Tibial artery (tissue), 4 donors: ENCODE measurements at regions of chr3 and their contacts with region 1.

Region 1: GRCh38 chr3:193253986-193254660 is 13.1 kb downstream of the PLAAT1 start:
- DNase-seq: no peak
- H3K4me3 ChIP-seq: no peak overlapping the region
- H3K27ac ChIP-seq: no peak overlapping the region
- H3K4me1 ChIP-seq: no peaks in the 10 kb centered on the region
- H3K27me3 ChIP-seq: peaks cover 0 to 2% of the 10 kb centered on the region in 2 donors
- CTCF ChIP-seq: no peak

Region 2: GRCh38 chr3:192816351-192816750 is 437.8 kb before region 1 on chr3:
- intact Hi-C with region 1: loop called (anchors 10 kb)
- DNase-seq: no peak
- H3K4me3 ChIP-seq: no peak overlapping the region
- H3K27ac ChIP-seq: no peak overlapping the region
- H3K4me1 ChIP-seq: peaks cover 0 to 11% (median 6%) of the 10 kb centered on the region in 4 donors
- H3K27me3 ChIP-seq: no peaks in the 10 kb centered on the region
- CTCF ChIP-seq: peak; percentile 72 to 75

Region 3: DNA sequence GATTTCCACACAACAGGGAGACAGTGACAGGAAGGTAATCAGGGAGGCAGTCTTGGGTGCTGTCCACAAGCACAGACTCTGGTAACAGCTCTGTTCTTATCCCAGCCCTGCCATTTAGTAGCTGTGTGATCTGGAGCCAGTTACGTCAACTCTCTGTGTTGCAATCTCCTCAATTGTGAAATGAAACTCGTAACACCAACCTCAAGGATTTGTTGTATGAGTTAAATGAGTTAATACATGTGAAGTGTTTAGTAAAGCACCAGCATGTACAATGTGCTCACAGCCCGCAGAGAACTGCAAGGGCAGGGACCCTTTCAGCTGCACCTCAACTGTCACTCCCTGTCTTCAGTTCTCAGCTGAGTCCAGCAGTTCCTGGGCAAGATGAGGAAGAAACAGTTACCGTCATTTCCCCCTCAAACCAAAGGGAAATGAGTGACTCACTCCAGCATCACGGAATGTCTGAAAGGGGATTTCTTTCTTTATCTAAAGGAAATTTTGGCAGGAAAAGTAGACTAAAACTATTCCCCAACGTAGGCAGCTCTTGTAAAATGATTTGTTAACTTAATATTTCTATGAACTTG is 296.6 kb before region 1 on chr3:
- intact Hi-C with region 1: no loop called
- DNase-seq: peak; percentile 46 to 67
- H3K4me3 ChIP-seq: no peak overlapping the region
- H3K27ac ChIP-seq: peak overlapping the region in 1 of 2 donors; percentile 39
- H3K4me1 ChIP-seq: no peaks in the 10 kb centered on the region
- H3K27me3 ChIP-seq: no peaks in the 10 kb centered on the region
- CTCF ChIP-seq: no peak